A549 (cell line): ENCODE measurements at regions of chr19 and their contacts with region 1.

Region 1: DNA sequence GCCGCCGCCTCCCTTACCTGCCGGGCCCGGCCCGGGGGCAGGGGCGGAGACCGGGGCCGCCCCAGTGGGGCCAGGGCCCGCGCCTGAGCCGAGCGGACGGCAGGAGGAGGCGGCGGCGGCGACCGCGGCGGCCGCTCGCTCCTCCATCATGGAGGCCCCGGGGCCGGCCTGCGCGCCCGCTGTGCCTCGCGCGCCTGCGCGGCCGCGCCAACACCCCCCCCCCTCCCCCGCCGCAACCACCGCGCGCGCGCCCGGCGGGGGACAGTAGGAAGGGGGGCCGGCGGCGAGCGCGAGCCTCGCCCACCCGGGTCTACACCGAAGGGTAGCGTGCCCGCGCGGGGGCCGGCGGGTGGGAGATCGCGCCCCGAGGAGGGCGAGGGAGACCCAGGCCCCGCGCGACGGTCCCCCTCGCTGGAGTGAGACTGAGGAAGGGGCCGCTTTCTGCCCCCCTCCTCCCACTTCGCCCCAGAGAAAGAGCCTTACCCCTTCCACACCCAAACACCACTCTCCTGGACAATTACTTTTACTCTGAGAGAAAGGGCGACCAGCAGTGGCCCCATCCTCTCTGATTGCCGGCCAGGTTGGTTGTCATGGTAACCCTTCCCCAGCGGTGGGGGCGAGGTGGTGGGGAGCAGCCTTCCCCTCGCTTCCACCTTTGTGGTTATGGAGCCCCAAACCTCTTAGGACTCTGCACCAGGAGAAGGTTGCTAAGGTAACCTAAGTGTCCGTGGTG is at the start of gene STRN4:
- DNase-seq: peak in 1 of 2 experiments; percentile 94
- ATAC-seq: peak; percentile 37 to 63
- H3K4me3 ChIP-seq: peak within 1 kb of the TSS; percentile 98
- H3K27ac ChIP-seq: peak within 1 kb of the TSS; percentile 99 to 100
- H3K4me1 ChIP-seq: peaks cover 17% of the 10 kb centered on the region
- CTCF ChIP-seq: no peak
- EP300 ChIP-seq: no peak
- POLR2A ChIP-seq: peak; percentile 51
- RAD21 ChIP-seq: no peak
- polyA plus RNA-seq, gene STRN4: 62.8 and 66.2 TPM in 2 replicates

Region 2: DNA sequence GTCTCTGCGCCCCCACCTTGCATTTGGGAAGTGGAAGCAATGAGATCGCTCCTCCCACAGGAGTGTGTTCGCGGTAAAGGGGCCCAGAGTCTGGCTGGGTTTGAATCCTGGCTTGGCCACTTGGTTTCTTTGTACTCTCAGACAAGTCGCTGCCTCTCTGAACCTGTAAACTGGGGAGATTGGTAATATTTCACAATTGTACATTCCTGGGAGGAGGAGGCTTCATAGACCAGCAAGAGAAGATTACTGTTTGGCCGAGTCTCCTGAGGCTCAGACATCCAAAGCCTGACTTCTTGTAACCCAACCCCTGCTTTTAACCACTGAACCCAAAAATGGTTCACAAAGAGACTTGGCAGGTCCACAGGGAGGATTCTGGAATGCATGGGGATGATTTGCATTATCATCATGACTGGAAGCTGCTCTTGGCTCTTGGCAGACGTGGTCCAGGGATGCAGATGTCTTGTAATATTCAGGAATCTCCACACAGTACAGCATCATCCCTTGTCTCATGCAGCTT is 13.4 kb after region 1 on chr19:
- CTCF ChIA-PET with region 1: interaction called, 170 read pairs
- POLR2A ChIA-PET with region 1: no interaction called
- DNase-seq: peak in 1 of 2 experiments; percentile 86
- ATAC-seq: peak; percentile 47 to 69; a peak in 3 of 6 replicates
- H3K4me3 ChIP-seq: no peak overlapping the region
- H3K27ac ChIP-seq: peak overlapping the region; percentile 27 to 70; a peak in 5 of 6 replicates
- H3K4me1 ChIP-seq: peaks cover 26% of the 10 kb centered on the region
- CTCF ChIP-seq: no peak
- EP300 ChIP-seq: no peak
- POLR2A ChIP-seq: no peak
- RAD21 ChIP-seq: no peak

Region 3: DNA sequence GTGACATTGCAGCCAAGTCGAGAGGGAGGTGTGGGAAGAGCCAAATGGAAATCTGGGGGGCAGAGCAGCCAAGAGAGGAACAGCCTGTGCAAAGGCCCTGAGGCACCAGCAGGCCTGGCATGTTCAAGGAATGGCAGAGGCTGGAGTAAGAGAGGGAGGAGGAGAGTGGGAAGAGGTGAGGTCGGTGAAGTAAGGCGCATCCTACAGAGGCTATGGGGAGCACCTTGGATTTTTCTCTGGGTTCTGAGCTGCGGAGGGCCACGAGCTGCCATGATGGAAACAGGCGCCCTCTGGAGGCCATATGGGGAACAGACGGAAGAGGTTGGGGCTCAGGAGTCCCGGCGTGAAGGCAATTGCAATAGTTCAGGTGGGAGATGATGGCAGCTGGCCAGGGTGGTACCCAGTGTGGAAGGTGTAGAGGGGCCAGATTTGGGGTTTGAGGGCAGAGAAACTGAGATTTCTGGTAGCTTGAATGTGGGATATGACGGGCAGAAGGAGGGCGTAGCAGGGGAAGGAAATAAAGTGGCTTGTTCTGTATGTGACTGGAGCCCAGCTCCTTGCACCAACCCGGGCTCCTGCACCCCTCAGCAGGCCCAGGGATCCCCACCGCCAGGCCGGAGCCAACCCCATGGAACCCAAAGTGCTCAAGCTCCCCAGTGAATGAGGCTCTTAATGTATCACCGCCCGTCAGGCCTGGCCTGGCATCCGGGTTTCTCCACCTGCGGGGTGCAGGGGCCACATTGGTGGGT is 20.3 kb after region 1 on chr19:
- CTCF ChIA-PET with region 1: interaction called, 170 read pairs
- POLR2A ChIA-PET with region 1: no interaction called
- DNase-seq: peak in 1 of 2 experiments; percentile 75
- ATAC-seq: peak; percentile 79 to 84
- H3K4me3 ChIP-seq: no peak overlapping the region
- H3K27ac ChIP-seq: no peak overlapping the region
- H3K4me1 ChIP-seq: peaks cover 21% of the 10 kb centered on the region; the same call in 2 of the 3 replicates
- CTCF ChIP-seq: peak; percentile 87
- EP300 ChIP-seq: no peak
- POLR2A ChIP-seq: no peak
- RAD21 ChIP-seq: peak; percentile 38 to 59; a peak in 4 of 5 replicates

Region 4: GRCh38 chr19:46776927-46777911 is 30.8 kb after region 1 on chr19:
- CTCF ChIA-PET with region 1: interaction called, 27 read pairs
- POLR2A ChIA-PET with region 1: no interaction called
- DNase-seq: peak in 1 of 2 experiments; percentile 55
- ATAC-seq: peak; percentile 31 to 45; a peak in 5 of 6 replicates
- H3K4me3 ChIP-seq: no peak overlapping the region
- H3K27ac ChIP-seq: no peak overlapping the region
- H3K4me1 ChIP-seq: peaks cover 21% of the 10 kb centered on the region
- CTCF ChIP-seq: no peak
- EP300 ChIP-seq: no peak
- POLR2A ChIP-seq: no peak
- RAD21 ChIP-seq: no peak

Region 5: DNA sequence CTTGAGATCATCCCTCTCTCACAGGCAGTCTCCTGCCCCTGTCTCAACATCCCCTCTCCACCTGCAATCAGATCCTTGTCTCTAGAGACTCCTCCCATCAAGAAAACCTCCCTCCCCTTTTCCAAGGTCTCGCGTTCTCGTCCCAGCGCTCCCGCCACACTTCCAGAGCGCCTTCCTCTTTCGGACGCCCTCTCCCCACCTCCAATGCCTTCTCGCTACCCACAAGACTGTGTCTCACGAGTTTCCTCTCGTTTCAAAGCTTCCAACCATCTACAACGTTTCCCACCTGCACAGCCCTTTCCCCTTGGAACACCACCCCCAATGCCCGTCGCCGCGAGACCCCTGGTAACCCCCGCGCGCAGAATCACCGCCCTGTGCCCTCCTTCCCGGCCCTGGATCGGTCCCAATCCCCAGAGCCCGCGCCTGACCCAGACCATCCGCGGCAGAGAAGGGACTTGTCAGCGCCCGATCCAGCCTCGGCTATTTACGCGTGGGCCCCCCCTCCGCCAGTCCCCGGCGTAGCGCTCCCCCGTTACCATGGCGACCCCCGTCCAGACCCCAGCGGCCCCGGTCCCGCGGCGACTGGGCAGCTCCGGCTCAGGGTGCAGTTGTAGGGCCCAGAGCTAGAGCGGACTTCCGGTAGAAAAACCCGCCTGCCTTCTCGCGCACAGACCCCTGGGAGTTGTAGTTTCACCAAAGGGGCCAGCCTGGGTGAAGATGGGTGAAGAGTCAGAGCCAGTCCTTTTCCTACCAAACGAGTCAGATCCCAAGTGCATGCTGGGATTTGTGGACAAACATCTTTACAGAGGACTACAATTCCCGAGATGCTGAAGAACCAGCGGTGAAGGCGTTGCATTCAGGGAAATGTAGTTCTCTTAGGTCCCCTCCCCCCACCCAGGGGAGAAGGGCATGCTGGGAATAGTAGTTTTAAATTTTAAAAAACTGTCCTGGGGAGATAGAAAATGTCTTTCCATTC is 104.1 kb after region 1 on chr19 and contains the start of gene AP2S1:
- CTCF ChIA-PET with region 1: interaction called, 1,222 read pairs
- POLR2A ChIA-PET with region 1: no interaction called
- DNase-seq: peak; percentile 99
- ATAC-seq: peak; percentile 97 to 98
- H3K4me3 ChIP-seq: peak within 1 kb of the TSS; percentile 67
- H3K27ac ChIP-seq: peak within 1 kb of the TSS; percentile 81 to 93
- H3K4me1 ChIP-seq: peaks cover 10% of the 10 kb centered on the region
- CTCF ChIP-seq: no peak
- EP300 ChIP-seq: no peak
- POLR2A ChIP-seq: peak; percentile 79
- RAD21 ChIP-seq: 0 out of 5 replicates have a peak, but pooled peaks of 1 of the 2 experiments have one; percentile 5
- polyA plus RNA-seq, gene AP2S1: 117 and 150 TPM in 2 replicates

Region 6: DNA sequence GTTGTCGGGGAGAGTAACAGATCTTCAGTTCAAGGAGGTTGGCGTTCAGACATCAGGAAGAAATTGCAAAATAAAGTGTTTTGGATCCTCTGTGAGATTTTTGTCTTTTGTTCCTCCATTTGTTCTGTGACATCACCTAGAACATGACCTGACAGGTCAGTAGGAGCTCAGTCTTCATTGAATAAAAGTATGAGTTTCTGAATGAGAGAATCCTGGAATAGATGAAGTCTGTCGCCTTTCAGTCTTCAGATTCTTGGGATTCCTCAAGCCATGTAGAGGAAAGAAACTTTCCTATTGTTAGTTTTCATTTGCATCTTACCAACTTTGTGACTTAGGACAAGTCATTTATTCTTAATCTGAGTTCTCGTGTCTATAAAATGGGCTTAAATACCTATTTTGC is 128.8 kb after region 1 on chr19:
- CTCF ChIA-PET with region 1: no interaction called
- POLR2A ChIA-PET with region 1: no interaction called
- DNase-seq: no peak
- ATAC-seq: no peak
- H3K4me3 ChIP-seq: no peak overlapping the region
- H3K27ac ChIP-seq: no peak overlapping the region; a peak in 1 of 6 replicates
- H3K4me1 ChIP-seq: peaks cover 48% of the 10 kb centered on the region
- CTCF ChIP-seq: no peak
- EP300 ChIP-seq: no peak
- POLR2A ChIP-seq: no peak
- RAD21 ChIP-seq: no peak

Region 7: DNA sequence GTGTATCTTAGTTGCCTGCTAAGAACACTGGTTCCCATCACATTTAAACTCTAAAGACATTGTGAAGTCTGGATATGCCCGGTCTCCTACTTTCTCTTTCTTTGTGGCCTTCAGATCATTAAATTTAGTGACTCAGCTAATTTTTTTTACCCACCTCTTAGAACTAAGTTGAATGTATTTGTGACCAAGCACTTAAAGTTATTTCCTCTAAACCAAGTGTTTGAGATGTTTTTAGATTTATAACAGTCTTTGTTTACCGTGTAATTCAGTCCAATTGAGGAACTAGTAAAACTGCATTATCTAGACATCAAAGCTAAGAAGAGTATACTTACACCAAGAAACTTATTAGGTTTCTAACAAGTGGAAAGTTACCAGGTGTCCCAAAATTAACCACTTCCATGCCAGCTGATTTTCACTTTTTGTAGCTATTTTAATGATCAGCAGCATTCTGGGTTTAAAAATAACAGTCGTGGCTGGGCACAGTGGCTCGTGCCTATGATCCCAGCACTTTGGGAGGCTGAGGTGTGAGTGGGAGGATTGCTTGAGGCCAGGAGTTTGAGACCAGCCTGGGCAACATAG is 167.5 kb after region 1 on chr19:
- CTCF ChIA-PET with region 1: no interaction called
- POLR2A ChIA-PET with region 1: no interaction called
- DNase-seq: peak; percentile 38 to 50
- ATAC-seq: peak in 1 of 2 experiments; percentile 37; a peak in 3 of 6 replicates
- H3K4me3 ChIP-seq: peak overlapping the region; percentile 10; the same call in 2 of the 3 replicates
- H3K27ac ChIP-seq: peak overlapping the region; percentile 62 to 76
- H3K4me1 ChIP-seq: peaks cover 66% of the 10 kb centered on the region
- CTCF ChIP-seq: no peak
- EP300 ChIP-seq: no peak
- POLR2A ChIP-seq: no peak
- RAD21 ChIP-seq: no peak

Region 8: DNA sequence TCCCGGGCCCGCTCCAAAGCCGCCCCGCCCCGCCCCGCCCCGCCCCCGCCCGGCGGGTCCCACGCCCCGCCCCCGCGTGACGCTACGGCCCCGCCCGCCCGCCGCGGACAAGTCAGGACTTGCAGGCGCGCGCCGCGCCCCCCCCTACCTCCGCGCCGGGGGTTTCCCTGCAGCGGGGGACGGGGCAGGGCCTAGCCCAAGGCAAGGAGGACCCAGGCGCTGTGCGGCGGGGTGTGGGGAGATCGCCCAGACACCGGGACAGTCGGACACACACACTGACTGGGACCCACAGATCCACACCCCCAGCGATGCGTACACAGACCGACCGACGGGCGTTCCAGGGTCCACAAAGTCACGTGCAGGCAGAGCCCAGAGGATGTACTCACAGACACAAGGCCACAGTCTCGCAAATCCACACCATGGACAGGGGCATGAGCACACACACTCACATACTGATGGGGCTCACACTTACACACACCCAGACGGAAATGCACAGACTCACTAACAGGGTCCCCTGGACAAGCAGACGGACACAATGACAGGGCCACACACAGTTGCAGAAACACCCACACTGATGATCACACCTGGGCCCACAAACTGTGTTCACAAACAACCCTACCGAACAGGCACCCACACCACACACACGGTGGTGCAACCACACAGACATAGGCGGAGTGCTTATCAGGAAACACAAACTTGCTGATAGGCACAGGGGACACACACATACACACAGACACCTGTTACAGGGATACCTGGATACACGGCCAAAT is 485.0 kb after region 1 on chr19:
- CTCF ChIA-PET with region 1: no interaction called
- POLR2A ChIA-PET with region 1: no interaction called
- DNase-seq: peak; percentile 72 to 90
- ATAC-seq: peak; percentile 4 to 7
- H3K4me3 ChIP-seq: peak overlapping the region; percentile 89
- H3K27ac ChIP-seq: peak overlapping the region; percentile 87 to 98
- H3K4me1 ChIP-seq: peaks cover 45% of the 10 kb centered on the region
- CTCF ChIP-seq: no peak
- EP300 ChIP-seq: no peak
- POLR2A ChIP-seq: no peak
- RAD21 ChIP-seq: no peak